Naive thymus-derived CD4-positive, alpha-beta T cell (primary cell): ENCODE measurements at regions of chr16 and their contacts with region 1.

Region 1: GRCh38 chr16:24721830-24722238 is 7.6 kb upstream of the TNRC6A start:
- DNase-seq: peak in 1 of 9 donors; percentile 51
- ATAC-seq: no peak
- H3K4me3 ChIP-seq: no peak overlapping the region
- H3K4me3 Mint-ChIP-seq: no peak overlapping the region
- H3K27ac ChIP-seq: no peak overlapping the region
- H3K27ac Mint-ChIP-seq: peak overlapping the region in 1 of 9 donors; percentile 21
- H3K4me1 ChIP-seq: no peaks in the 10 kb centered on the region
- H3K4me1 Mint-ChIP-seq: peaks cover 0 to 13% (median 0%) of the 10 kb centered on the region in 7 donors
- H3K27me3 ChIP-seq: no peaks in the 10 kb centered on the region
- H3K27me3 Mint-ChIP-seq: peaks cover 0 to 12% (median 11%) of the 10 kb centered on the region in 5 donors

Region 2: GRCh38 chr16:24396350-24397271 is 325.2 kb before region 1 on chr16:
- CTCF ChIA-PET with region 1: no interaction called
- POLR2A ChIA-PET with region 1: no interaction called
- intact Hi-C with region 1: no loop called
- DNase-seq: no peak
- ATAC-seq: no peak
- H3K4me3 ChIP-seq: no peak overlapping the region
- H3K4me3 Mint-ChIP-seq: no peak overlapping the region
- H3K27ac ChIP-seq: no peak overlapping the region
- H3K27ac Mint-ChIP-seq: no peak overlapping the region
- H3K4me1 ChIP-seq: no peaks in the 10 kb centered on the region
- H3K4me1 Mint-ChIP-seq: no peaks in the 10 kb centered on the region
- H3K27me3 ChIP-seq: no peaks in the 10 kb centered on the region
- H3K27me3 Mint-ChIP-seq: peaks cover 9 to 49% (median 32%) of the 10 kb centered on the region in 5 donors

Region 3: GRCh38 chr16:24741862-24742261 is 20.0 kb after region 1 on chr16:
- CTCF ChIA-PET with region 1: no interaction called
- POLR2A ChIA-PET with region 1: interaction called, 3 read pairs
- intact Hi-C with region 1: loop called in 1 of 2 experiments (anchors 2 kb)
- DNase-seq: no peak
- ATAC-seq: no peak
- H3K4me3 ChIP-seq: no peak overlapping the region
- H3K4me3 Mint-ChIP-seq: peak overlapping the region in 6 of 10 donors; percentile 7 to 60 (median 18)
- H3K27ac ChIP-seq: no peak overlapping the region
- H3K27ac Mint-ChIP-seq: peak overlapping the region in 2 of 9 donors; percentile 8 to 48
- H3K4me1 ChIP-seq: peaks cover 3 to 57% of the 10 kb centered on the region in 2 donors
- H3K4me1 Mint-ChIP-seq: peaks cover 59 to 100% (median 98%) of the 10 kb centered on the region in 7 donors
- H3K27me3 ChIP-seq: no peaks in the 10 kb centered on the region
- H3K27me3 Mint-ChIP-seq: no peaks in the 10 kb centered on the region

Region 4: DNA sequence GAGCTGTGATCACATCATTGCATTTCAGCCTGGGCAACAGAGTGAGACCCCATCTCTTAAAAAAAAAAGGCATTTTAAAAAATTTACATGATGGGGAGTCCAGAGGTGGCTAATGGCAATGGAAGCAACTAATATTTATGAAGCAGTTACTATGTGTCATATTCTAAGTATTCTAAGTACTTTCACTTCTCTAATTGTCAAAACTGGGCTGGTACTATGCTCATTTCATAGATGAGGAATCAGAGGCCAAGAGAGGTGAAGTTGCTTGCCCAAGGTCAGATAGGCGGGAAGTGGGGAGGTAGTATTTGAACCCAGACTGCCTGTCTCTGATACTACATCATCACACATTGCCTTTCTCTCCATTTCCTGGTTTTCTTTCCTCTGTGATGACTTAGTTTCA is 174.6 kb after region 1 on chr16:
- CTCF ChIA-PET with region 1: no interaction called
- POLR2A ChIA-PET with region 1: no interaction called
- intact Hi-C with region 1: no loop called
- DNase-seq: no peak
- ATAC-seq: peak; percentile 52
- H3K4me3 ChIP-seq: no peak overlapping the region
- H3K4me3 Mint-ChIP-seq: no peak overlapping the region
- H3K27ac ChIP-seq: no peak overlapping the region
- H3K27ac Mint-ChIP-seq: no peak overlapping the region
- H3K4me1 ChIP-seq: no peaks in the 10 kb centered on the region
- H3K4me1 Mint-ChIP-seq: no peaks in the 10 kb centered on the region
- H3K27me3 ChIP-seq: no peaks in the 10 kb centered on the region
- H3K27me3 Mint-ChIP-seq: peaks cover 0 to 6% (median 2%) of the 10 kb centered on the region in 5 donors

Region 5: DNA sequence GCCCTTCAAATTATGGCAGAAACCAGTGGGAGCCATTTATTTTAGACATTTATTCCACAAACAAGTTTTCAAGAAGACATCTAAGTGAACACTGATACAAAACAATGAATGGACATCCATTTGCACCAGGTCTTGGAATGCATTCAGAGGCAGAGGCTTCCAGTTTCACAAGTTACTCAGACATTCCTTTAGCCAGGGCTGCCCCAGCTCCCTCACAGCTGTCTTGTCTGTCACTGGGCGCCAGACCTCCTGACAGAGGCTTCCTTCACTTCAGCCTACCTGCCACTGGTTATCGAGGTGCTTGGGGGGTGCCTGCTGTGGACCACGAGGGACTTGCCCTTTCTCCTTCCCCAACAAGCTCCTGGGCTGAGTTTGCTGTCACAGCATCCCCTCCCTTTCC is 514.2 kb after region 1 on chr16:
- CTCF ChIA-PET with region 1: no interaction called
- POLR2A ChIA-PET with region 1: no interaction called
- intact Hi-C with region 1: no loop called
- DNase-seq: no peak
- ATAC-seq: no peak
- H3K4me3 ChIP-seq: no peak overlapping the region
- H3K4me3 Mint-ChIP-seq: no peak overlapping the region
- H3K27ac ChIP-seq: no peak overlapping the region
- H3K27ac Mint-ChIP-seq: no peak overlapping the region
- H3K4me1 ChIP-seq: no peaks in the 10 kb centered on the region
- H3K4me1 Mint-ChIP-seq: peaks cover 0 to 5% (median 0%) of the 10 kb centered on the region in 7 donors
- H3K27me3 ChIP-seq: no peaks in the 10 kb centered on the region
- H3K27me3 Mint-ChIP-seq: no peaks in the 10 kb centered on the region